ENCODE measurements at regions of chr2 and their contacts with region 1.

Region 1: DNA sequence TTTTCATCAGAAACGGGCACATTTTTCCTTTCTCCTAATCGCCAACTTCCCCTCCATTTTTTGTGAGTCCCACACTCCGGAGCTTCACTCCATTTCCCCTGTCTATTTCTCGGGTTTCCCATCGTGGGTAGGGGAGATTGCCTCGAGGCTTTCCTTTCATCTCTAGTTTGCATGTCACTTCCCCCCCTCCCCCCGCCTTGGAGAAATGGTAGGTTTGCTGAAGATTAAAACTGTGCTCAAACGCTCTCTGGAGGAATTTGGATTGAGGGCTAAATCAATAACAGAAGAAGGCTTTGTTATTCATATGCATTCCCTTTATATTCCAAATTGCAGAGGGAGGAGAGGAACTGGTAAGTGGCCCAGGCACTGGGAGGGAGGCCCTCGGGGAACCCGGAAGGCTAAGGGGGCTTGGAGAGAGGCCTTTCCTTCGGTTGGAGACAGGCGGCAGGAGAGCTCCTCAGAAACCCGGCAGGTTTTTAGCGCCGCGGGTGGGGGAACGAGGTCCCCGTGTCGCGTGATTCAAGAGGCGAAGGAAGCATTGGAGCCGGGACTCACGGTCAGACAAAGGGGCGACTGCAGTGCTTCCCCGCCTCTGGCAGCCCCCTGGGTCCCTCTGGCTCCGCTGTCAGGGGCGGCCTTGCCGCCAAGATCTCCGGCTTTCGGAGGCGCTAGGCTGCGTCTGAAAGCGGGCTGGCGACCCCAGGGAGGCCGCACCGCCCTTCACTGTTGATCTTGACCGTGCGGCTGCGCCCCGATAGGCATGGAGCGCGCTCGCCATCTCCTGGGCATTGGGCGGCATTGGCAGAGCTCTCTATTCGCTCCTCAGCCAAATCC is 2.4 kb upstream of the HOXD12 start:
- DNase-seq: peak; percentile 86
- H3K4me3 Mint-ChIP-seq: peak overlapping the region; percentile 85
- H3K27ac Mint-ChIP-seq: peak overlapping the region; percentile 80
- H3K4me1 Mint-ChIP-seq: peaks cover 9% of the 10 kb centered on the region
- H3K27me3 Mint-ChIP-seq: peaks cover 8% of the 10 kb centered on the region
- CTCF ChIP-seq: peak; percentile 95

Region 2: GRCh38 chr2:175203621-175204496 is 893.3 kb before region 1 on chr2:
- CTCF ChIA-PET with region 1: interaction called, 5 read pairs
- intact Hi-C with region 1: loop called (anchors 5 kb)
- DNase-seq: peak; percentile 70
- H3K4me3 Mint-ChIP-seq: no peak overlapping the region
- H3K27ac Mint-ChIP-seq: no peak overlapping the region
- H3K4me1 Mint-ChIP-seq: no peaks in the 10 kb centered on the region
- H3K27me3 Mint-ChIP-seq: no peaks in the 10 kb centered on the region
- CTCF ChIP-seq: peak; percentile 47

Region 3: DNA sequence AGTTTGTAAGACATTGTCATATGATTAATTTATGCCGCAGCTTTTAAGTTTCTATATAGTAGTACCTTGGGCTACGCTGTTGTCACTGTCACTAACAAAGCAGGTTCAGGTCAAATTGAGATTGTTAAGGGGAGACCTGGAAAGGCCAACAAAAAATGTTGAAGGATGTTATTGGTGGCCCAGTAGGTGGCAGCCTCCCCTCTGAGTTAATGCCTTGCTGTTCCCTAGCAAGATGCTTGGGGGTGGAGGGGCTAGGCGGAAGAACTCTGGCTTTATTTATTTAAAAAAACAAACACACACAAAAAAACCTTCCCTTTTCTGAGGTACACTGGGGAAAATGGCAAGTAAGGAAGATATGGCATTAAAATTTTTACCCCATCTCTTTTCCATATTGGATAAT is 787.4 kb before region 1 on chr2:
- CTCF ChIA-PET with region 1: no interaction called
- intact Hi-C with region 1: loop called (anchors 5 kb)
- DNase-seq: peak; percentile 65
- H3K4me3 Mint-ChIP-seq: no peak overlapping the region
- H3K27ac Mint-ChIP-seq: no peak overlapping the region
- H3K4me1 Mint-ChIP-seq: peaks cover 7% of the 10 kb centered on the region
- H3K27me3 Mint-ChIP-seq: peaks cover 55% of the 10 kb centered on the region
- CTCF ChIP-seq: peak; percentile 55

Region 4: GRCh38 chr2:175690113-175690837 is 406.9 kb before region 1 on chr2:
- CTCF ChIA-PET with region 1: interaction called, 13 read pairs
- intact Hi-C with region 1: loop called (anchors 1 kb)
- DNase-seq: peak; percentile 51
- H3K4me3 Mint-ChIP-seq: no peak overlapping the region
- H3K27ac Mint-ChIP-seq: no peak overlapping the region
- H3K4me1 Mint-ChIP-seq: no peaks in the 10 kb centered on the region
- H3K27me3 Mint-ChIP-seq: peaks cover 39% of the 10 kb centered on the region
- CTCF ChIP-seq: peak; percentile 76

Region 5: DNA sequence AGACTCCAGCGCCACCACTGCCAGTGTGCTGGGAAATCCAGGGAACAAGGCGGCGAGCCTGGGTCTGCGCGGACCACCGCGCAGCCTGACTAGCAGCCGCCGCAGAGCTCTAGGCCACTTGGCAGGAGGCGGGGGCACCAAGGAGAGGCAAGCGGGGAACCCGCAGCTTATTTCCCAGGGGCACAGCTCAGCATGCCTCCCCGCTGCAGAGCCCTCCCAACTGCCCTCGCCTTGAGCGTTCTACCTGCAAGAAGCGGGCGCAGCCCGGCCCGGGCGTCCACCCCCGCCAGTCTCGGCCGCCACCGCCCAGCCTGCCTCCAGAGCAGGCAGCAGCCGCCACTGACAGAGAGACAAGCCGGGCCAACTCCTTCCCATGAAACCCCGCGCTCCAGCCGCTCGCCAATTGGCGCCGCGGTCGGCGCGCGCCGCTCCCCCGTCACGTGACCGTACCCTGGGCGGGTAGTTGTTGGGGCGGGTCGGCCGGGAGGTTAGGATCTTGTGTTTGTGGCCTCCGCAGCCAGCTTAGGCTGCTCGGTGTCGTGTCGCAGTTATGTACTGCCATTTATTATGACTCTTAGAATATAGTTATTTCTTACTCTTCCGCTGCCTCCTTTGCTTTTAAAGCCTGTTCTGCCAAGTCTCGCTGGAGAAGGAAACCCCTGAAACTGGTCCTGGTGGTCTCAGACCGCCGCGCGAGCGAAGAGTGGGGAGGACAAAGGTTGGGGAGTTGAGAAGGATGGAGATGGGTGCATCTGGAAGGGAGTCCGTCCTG is 95.1 kb before region 1 on chr2 and contains the start of gene LNPK:
- CTCF ChIA-PET with region 1: interaction called, 4 read pairs
- intact Hi-C with region 1: loop called (anchors 5 kb)
- DNase-seq: peak; percentile 92
- H3K4me3 Mint-ChIP-seq: peak within 1 kb of the TSS; percentile 93
- H3K27ac Mint-ChIP-seq: peak within 1 kb of the TSS; percentile 76
- H3K4me1 Mint-ChIP-seq: peaks cover 30% of the 10 kb centered on the region
- H3K27me3 Mint-ChIP-seq: no peaks in the 10 kb centered on the region
- CTCF ChIP-seq: no peak
- total RNA-seq, gene LNPK: 24.6 and 31.1 TPM in 2 replicates

Region 6: GRCh38 chr2:176781570-176782217 is 684.5 kb after region 1 on chr2:
- CTCF ChIA-PET with region 1: no interaction called
- intact Hi-C with region 1: no loop called
- DNase-seq: no peak
- H3K4me3 Mint-ChIP-seq: no peak overlapping the region
- H3K27ac Mint-ChIP-seq: no peak overlapping the region
- H3K4me1 Mint-ChIP-seq: no peaks in the 10 kb centered on the region
- H3K27me3 Mint-ChIP-seq: peaks cover 15% of the 10 kb centered on the region
- CTCF ChIP-seq: no peak

Measured in Calu3 (cell line).